Naive thymus-derived CD4-positive, alpha-beta T cell (primary cell): ENCODE measurements at regions of chr6 and their contacts with region 1.

Region 1: DNA sequence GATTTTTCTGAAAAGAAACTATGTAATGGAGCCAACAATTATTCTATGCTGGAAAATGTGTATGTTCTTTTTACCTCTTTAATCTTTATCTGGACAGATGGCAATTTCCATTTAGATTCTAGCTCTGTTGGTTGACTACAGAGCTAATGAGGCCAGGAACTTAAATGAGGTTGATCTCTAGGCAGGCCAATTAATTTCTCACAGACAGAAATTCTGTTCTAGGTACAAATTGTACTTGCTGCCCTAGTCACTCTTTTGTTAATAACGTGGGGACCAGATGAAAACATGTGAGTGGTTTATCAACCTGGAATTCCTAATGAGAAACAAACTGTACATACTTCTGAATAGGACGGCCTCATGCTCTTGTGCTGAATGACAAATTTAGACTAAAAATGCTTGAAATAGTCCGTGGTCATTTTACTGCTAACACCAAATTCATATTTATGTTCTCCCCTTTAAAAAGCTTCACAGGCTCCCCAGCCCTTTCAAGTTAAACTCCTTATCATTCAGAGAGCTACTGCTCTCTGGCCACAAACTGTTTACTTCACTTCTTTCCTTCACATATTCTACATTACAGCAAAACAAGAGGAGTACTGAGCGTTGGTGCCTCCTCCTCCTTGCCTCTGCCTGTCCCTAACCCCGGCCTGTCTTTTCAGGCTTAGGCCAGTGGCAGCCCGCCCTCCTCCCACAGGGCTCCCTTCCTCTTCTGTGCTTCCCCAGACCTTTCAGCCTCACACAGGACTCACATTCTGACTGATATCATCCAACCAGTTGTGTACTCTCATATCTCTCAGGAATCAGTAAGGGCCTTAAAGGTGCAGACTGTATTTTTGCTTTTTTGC is 41.4 kb downstream of the DTNBP1 start:
- DNase-seq: peak in 1 of 9 donors; percentile 34
- ATAC-seq: peak; percentile 86
- H3K4me3 ChIP-seq: no peak overlapping the region
- H3K4me3 Mint-ChIP-seq: peak overlapping the region in 1 of 10 donors; percentile 5
- H3K27ac ChIP-seq: no peak overlapping the region
- H3K27ac Mint-ChIP-seq: peak overlapping the region in 2 of 9 donors; percentile 3 to 52
- H3K4me1 ChIP-seq: no peaks in the 10 kb centered on the region
- H3K4me1 Mint-ChIP-seq: peaks cover 19 to 55% (median 42%) of the 10 kb centered on the region in 7 donors
- H3K27me3 ChIP-seq: no peaks in the 10 kb centered on the region
- H3K27me3 Mint-ChIP-seq: no peaks in the 10 kb centered on the region

Region 2: DNA sequence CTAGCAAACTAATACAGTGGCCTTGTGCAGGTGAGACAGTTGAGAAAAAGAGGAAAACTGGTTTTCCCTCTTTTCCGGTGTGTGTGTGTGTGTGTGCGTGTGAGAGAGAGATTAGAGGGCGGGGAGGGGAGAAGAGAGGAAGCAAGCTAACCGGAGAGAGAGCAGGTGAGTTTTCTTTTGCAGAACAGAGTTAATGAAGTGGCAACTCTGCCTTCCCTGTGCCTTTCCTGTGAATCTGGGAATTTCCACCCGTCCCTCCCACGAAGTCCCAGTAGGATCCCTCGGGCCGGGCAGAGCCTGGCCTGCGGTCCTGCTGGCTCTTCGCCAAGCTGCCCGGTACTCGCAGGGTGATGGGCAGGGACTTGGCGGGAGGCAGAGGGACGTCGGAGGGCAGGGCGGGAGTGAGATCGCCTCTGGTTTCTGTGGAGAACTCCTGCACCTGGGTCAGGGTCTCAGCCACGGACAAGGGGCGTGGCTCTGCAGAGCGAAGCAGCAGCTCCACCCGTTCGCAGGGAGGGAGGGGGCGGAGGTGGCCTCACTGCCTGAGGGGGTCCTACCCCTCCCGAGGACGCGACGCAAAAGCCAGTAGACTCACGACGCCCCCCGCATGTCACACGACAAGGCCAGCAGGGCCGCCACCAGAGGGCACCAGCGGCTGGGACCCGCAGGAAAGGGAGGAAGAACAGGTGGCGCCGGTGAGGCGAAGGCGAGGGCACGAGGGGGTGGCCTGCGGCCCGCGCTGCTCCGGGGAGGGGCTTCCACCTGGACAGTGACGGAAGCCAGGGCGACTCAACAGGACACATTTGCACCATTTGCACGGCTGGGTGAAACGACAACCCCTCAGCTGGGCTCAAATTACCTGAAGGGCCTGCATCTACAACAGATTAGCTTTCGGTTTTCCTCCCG is 1747.9 kb before region 1 on chr6:
- CTCF ChIA-PET with region 1: no interaction called
- POLR2A ChIA-PET with region 1: no interaction called
- intact Hi-C with region 1: loop called in 1 of 2 experiments (anchors 1 kb)
- DNase-seq: peak; percentile 41 to 75 (median 66)
- ATAC-seq: peak; percentile 88
- H3K4me3 ChIP-seq: peak overlapping the region; percentile 59
- H3K4me3 Mint-ChIP-seq: peak overlapping the region; percentile 76 to 92 (median 85)
- H3K27ac ChIP-seq: peak overlapping the region; percentile 2
- H3K27ac Mint-ChIP-seq: peak overlapping the region in 5 of 9 donors; percentile 3 to 60 (median 38)
- H3K4me1 ChIP-seq: peaks cover 0 to 4% of the 10 kb centered on the region in 2 donors
- H3K4me1 Mint-ChIP-seq: peaks cover 9 to 20% (median 17%) of the 10 kb centered on the region in 7 donors
- H3K27me3 ChIP-seq: no peaks in the 10 kb centered on the region
- H3K27me3 Mint-ChIP-seq: peaks cover 2 to 14% (median 7%) of the 10 kb centered on the region in 5 donors

Region 3: DNA sequence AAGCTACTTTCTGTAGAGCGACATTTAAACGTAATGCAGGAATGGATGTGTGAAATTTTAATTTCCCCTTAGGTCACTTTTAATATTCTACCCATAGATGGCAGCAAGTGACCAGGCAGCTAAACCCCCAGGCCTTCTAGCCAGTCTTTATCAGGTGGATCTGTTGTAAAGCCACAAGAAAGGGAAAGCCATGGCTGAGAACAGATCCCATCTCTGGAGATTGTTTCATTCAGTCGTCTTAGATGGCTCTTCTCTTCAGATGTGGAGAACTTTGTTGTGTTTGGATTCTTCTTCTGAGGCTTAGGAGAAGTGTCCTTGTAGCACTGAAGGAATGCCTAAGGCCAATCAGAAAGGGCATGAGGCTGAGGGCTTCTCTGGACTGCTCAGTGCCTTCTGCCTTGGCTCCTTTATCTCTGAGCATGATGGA is 1712.5 kb before region 1 on chr6:
- CTCF ChIA-PET with region 1: no interaction called
- POLR2A ChIA-PET with region 1: no interaction called
- intact Hi-C with region 1: loop called in 1 of 2 experiments (anchors 10 kb)
- DNase-seq: peak in 7 of 9 donors; percentile 22 to 56 (median 36)
- ATAC-seq: peak; percentile 92
- H3K4me3 ChIP-seq: no peak overlapping the region
- H3K4me3 Mint-ChIP-seq: no peak overlapping the region
- H3K27ac ChIP-seq: no peak overlapping the region
- H3K27ac Mint-ChIP-seq: no peak overlapping the region
- H3K4me1 ChIP-seq: peaks cover 0 to 5% of the 10 kb centered on the region in 2 donors
- H3K4me1 Mint-ChIP-seq: peaks cover 0 to 8% (median 3%) of the 10 kb centered on the region in 7 donors
- H3K27me3 ChIP-seq: no peaks in the 10 kb centered on the region
- H3K27me3 Mint-ChIP-seq: peaks cover 24 to 51% (median 39%) of the 10 kb centered on the region in 5 donors

Region 4: DNA sequence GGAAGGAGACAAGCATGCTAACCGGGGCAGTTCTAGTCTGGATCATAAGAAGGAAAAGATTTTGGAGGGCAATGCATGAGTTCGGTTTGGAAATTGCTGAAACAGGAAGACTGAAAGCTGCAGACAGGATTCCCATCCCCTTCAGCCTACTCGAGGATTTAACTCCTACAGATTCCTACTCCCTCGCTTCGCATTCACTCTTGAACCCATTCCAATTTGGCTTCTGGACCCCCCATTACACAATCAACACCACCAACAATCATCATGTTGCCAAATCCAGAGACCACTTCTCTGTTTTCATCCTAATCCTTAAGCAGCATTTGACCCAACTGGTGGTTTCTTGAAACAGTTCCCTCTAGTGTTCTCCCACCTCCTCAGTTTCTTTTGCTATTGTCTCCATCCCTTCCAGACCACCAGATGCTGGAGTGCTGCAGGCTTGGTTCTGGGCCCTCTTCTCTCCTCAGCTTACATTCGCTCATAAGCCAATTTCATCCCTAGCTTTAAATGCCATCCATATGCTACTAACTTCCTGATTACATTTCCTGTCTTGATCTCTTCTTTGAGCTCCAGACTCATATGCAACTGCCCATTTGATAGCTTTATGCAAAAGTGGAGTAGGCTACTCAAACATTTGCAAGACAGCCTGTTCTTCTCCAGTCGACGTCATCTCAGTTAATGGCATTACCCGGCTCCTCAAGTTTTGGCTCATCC is 25.1 kb before region 1 on chr6:
- CTCF ChIA-PET with region 1: no interaction called
- POLR2A ChIA-PET with region 1: no interaction called
- intact Hi-C with region 1: no loop called
- DNase-seq: no peak
- ATAC-seq: no peak
- H3K4me3 ChIP-seq: no peak overlapping the region
- H3K4me3 Mint-ChIP-seq: no peak overlapping the region
- H3K27ac ChIP-seq: no peak overlapping the region
- H3K27ac Mint-ChIP-seq: peak overlapping the region in 2 of 9 donors; percentile 1 to 20
- H3K4me1 ChIP-seq: no peaks in the 10 kb centered on the region
- H3K4me1 Mint-ChIP-seq: peaks cover 7 to 78% (median 57%) of the 10 kb centered on the region in 7 donors
- H3K27me3 ChIP-seq: no peaks in the 10 kb centered on the region
- H3K27me3 Mint-ChIP-seq: no peaks in the 10 kb centered on the region

Region 5: DNA sequence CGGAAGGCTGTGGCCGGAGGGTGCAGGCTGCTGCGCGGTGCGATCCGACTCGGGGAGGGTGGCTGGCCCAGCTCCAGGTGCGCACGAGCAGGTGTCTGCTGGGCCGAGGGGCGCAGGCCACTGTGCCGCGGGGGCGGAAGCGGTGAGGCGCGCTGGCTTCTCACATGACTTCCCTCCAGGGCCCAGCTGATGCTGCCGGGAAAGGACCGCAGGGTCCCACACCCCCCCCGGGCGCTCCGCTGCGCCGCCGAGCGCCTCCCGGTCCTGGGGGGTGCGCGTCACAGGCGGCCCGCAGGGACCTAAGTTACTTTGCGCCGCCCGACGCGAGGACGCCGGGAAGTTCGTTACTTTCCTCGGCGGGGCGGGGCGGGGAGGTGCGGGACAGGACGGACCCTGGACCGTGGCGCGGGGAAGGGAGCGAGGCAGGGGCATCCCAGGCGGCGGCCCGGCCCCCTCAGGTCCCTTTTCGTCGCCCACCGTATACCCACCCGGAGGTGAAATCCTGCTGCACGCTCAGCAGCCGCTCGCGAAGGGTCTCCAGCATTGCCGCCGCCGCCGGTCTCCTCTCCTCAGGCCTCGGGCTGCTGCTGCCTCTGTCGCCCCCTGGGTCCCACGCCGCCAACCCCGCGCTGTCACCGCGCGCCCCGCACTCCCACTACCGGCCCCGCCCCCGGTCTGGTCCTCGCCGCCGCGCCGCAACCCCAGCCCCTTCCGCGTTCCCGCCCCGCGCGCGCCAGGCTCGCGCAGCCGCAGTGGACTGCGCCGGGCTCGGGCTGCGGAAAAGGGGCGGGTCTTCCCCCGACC is 41.1 kb after region 1 on chr6 and contains the start of gene DTNBP1:
- CTCF ChIA-PET with region 1: no interaction called
- POLR2A ChIA-PET with region 1: interaction called, 3 read pairs
- intact Hi-C with region 1: loop called in 1 of 2 experiments (anchors 1 kb)
- DNase-seq: peak; percentile 74 to 93 (median 84)
- ATAC-seq: peak; percentile 90
- H3K4me3 ChIP-seq: peak within 1 kb of the TSS; percentile 82
- H3K4me3 Mint-ChIP-seq: peak within 1 kb of the TSS; percentile 75 to 93 (median 88)
- H3K27ac ChIP-seq: peak within 1 kb of the TSS; percentile 71
- H3K27ac Mint-ChIP-seq: peak within 1 kb of the TSS; percentile 71 to 90 (median 82)
- H3K4me1 ChIP-seq: peaks cover 11 to 20% of the 10 kb centered on the region in 2 donors
- H3K4me1 Mint-ChIP-seq: peaks cover 20 to 47% (median 39%) of the 10 kb centered on the region in 7 donors
- H3K27me3 ChIP-seq: no peaks in the 10 kb centered on the region
- H3K27me3 Mint-ChIP-seq: peaks cover 0 to 20% (median 4%) of the 10 kb centered on the region in 5 donors
- total RNA-seq, gene DTNBP1: 19.8 to 30.8 (median 25.3) TPM

Region 6: GRCh38 chr6:15715060-15715459 is 93.6 kb after region 1 on chr6:
- CTCF ChIA-PET with region 1: no interaction called
- POLR2A ChIA-PET with region 1: no interaction called
- intact Hi-C with region 1: no loop called
- DNase-seq: no peak
- ATAC-seq: no peak
- H3K4me3 ChIP-seq: no peak overlapping the region
- H3K4me3 Mint-ChIP-seq: no peak overlapping the region
- H3K27ac ChIP-seq: no peak overlapping the region
- H3K27ac Mint-ChIP-seq: no peak overlapping the region
- H3K4me1 ChIP-seq: no peaks in the 10 kb centered on the region
- H3K4me1 Mint-ChIP-seq: peaks cover 0 to 5% (median 0%) of the 10 kb centered on the region in 7 donors
- H3K27me3 ChIP-seq: no peaks in the 10 kb centered on the region
- H3K27me3 Mint-ChIP-seq: peaks cover 0 to 20% (median 10%) of the 10 kb centered on the region in 5 donors